Psoas muscle (tissue), 8 donors: ENCODE measurements at regions of chr9 and their contacts with region 1.

Region 1: GRCh38 chr9:115524453-115525059 is 406.6 kb upstream of the TNC start:
- DNase-seq: no peak
- ATAC-seq: no peak
- H3K4me3 ChIP-seq: no peak overlapping the region
- H3K27ac ChIP-seq: no peak overlapping the region
- H3K4me1 ChIP-seq: no peaks in the 10 kb centered on the region
- H3K27me3 ChIP-seq: no peaks in the 10 kb centered on the region
- CTCF ChIP-seq: peak; percentile 57

Region 2: GRCh38 chr9:114738581-114739316 is 785.8 kb before region 1 on chr9:
- intact Hi-C with region 1: loop called (anchors 5 to 10 kb)
- DNase-seq: peak; percentile 44 to 66
- ATAC-seq: peak; percentile 61 to 81 (median 80)
- H3K4me3 ChIP-seq: no peak overlapping the region
- H3K27ac ChIP-seq: no peak overlapping the region
- H3K4me1 ChIP-seq: no peaks in the 10 kb centered on the region
- H3K27me3 ChIP-seq: no peaks in the 10 kb centered on the region
- CTCF ChIP-seq: peak; percentile 86

Region 3: GRCh38 chr9:115204904-115205453 is 319.6 kb before region 1 on chr9:
- intact Hi-C with region 1: no loop called
- DNase-seq: no peak
- ATAC-seq: no peak
- H3K4me3 ChIP-seq: no peak overlapping the region
- H3K27ac ChIP-seq: no peak overlapping the region
- H3K4me1 ChIP-seq: no peaks in the 10 kb centered on the region
- H3K27me3 ChIP-seq: no peaks in the 10 kb centered on the region
- CTCF ChIP-seq: no peak

Region 4: DNA sequence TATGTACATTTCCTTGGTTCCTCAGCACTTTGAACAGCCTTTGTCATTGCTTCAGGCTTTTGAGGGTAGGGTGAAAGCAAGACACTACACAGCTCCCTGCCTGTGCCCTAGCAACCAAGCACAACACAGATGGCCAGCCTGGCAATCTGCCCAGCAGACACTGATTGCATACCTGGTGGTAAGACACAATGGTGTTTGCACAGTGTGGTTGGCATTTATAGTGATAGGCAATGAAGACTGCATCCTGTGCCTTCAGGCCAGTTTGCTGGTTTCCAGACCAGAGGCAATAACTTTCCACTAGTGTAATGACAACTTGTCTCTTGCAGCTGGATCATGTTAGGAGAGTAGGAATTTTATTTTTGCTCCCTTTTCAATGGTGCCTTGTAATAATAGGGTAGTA is 262.1 kb before region 1 on chr9:
- intact Hi-C with region 1: no loop called
- DNase-seq: peak; percentile 10 to 49
- ATAC-seq: no peak
- H3K4me3 ChIP-seq: no peak overlapping the region
- H3K27ac ChIP-seq: no peak overlapping the region
- H3K4me1 ChIP-seq: no peaks in the 10 kb centered on the region
- H3K27me3 ChIP-seq: no peaks in the 10 kb centered on the region
- CTCF ChIP-seq: no peak

Region 5: GRCh38 chr9:115456515-115456914 is 68.0 kb before region 1 on chr9:
- intact Hi-C with region 1: no loop called
- DNase-seq: no peak
- ATAC-seq: no peak
- H3K4me3 ChIP-seq: no peak overlapping the region
- H3K27ac ChIP-seq: no peak overlapping the region
- H3K4me1 ChIP-seq: no peaks in the 10 kb centered on the region
- H3K27me3 ChIP-seq: no peaks in the 10 kb centered on the region
- CTCF ChIP-seq: no peak